WTC11 (cell line): ENCODE measurements at regions of chr11 and their contacts with region 1.

Region 1: DNA sequence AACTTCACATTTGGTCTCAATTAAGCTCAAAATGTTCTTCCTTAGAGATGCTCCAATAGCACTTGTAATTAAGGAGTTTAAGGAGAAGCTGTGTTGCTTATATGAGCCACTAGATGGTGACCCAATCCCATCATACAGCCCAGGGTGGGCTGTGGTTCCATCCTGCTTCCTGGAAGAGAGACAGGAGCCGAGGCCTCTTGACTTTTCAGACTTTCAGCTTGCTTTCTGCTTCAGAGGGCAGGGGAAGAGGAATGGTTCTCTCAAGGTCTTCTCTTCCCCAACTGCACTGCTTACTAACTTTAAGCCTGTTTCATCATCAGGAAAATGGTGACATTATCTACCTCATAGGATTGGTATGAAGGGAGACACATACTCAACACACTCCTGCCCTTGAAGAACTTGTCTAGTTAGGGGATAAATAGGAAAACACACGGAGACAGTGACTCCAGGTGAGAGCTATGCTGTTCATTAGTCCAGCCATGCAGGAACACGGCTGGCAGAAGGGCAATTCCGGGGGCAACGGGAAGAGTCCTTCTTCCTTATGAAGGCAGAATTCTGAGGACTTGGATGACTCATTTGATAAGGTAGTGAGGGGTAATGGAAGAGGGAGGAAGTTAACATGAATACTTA is 20.1 kb downstream of the TMEM218 start:
- DNase-seq: peak; percentile 58
- ATAC-seq: peak; percentile 95
- H3K4me3 Mint-ChIP-seq: no peak overlapping the region
- H3K27ac Mint-ChIP-seq: peak overlapping the region; percentile 64
- H3K4me1 Mint-ChIP-seq: peaks cover 25% of the 10 kb centered on the region
- H3K27me3 Mint-ChIP-seq: no peaks in the 10 kb centered on the region
- CTCF ChIP-seq: peak; percentile 25; the same call in 1 of the 2 replicates

Region 2: GRCh38 chr11:124946735-124947141 is 144.6 kb before region 1 on chr11:
- CTCF ChIA-PET with region 1: no interaction called
- POLR2A ChIA-PET with region 1: no interaction called
- DNase-seq: no peak
- ATAC-seq: no peak
- H3K4me3 Mint-ChIP-seq: no peak overlapping the region
- H3K27ac Mint-ChIP-seq: no peak overlapping the region
- H3K4me1 Mint-ChIP-seq: no peaks in the 10 kb centered on the region
- H3K27me3 Mint-ChIP-seq: peaks cover 23% of the 10 kb centered on the region
- CTCF ChIP-seq: no peak

Region 3: DNA sequence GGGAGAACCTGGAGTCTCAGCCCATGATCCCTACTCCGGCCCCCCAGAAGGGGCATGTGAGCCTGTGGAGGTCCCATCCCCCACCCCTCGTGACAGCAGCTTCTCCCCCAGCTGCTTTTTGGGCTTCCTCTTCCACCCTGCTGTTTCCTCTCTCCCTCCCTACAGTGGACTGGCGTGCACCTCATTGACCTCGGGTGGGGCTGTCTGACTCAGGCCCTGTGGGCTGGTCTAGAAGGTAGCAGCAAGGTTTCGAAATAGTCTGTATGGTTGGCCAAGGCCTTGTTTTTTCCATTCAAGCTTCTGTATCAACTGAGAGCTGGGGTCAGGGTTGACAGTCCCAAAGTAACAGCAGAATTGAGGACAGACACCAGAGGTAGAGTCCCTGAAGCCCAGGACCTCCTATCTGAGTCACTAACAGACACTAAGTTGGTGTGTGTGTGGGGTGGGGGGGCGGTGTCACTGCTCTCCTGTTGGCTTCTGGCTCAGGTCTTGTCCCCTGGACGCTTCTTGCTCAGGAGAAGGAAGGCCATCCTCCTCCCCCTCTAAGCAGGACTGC is 20.6 kb before region 1 on chr11:
- CTCF ChIA-PET with region 1: interaction called, 21 read pairs
- POLR2A ChIA-PET with region 1: no interaction called
- DNase-seq: no peak
- ATAC-seq: no peak
- H3K4me3 Mint-ChIP-seq: no peak overlapping the region
- H3K27ac Mint-ChIP-seq: no peak overlapping the region
- H3K4me1 Mint-ChIP-seq: peaks cover 16% of the 10 kb centered on the region
- H3K27me3 Mint-ChIP-seq: peaks cover 7% of the 10 kb centered on the region
- CTCF ChIP-seq: no peak

Region 4: GRCh38 chr11:125117429-125117828 is 26.1 kb after region 1 on chr11:
- CTCF ChIA-PET with region 1: interaction called, 45 read pairs
- POLR2A ChIA-PET with region 1: no interaction called
- DNase-seq: no peak
- ATAC-seq: no peak
- H3K4me3 Mint-ChIP-seq: no peak overlapping the region
- H3K27ac Mint-ChIP-seq: no peak overlapping the region
- H3K4me1 Mint-ChIP-seq: no peaks in the 10 kb centered on the region
- H3K27me3 Mint-ChIP-seq: peaks cover 50% of the 10 kb centered on the region
- CTCF ChIP-seq: no peak

Region 5: DNA sequence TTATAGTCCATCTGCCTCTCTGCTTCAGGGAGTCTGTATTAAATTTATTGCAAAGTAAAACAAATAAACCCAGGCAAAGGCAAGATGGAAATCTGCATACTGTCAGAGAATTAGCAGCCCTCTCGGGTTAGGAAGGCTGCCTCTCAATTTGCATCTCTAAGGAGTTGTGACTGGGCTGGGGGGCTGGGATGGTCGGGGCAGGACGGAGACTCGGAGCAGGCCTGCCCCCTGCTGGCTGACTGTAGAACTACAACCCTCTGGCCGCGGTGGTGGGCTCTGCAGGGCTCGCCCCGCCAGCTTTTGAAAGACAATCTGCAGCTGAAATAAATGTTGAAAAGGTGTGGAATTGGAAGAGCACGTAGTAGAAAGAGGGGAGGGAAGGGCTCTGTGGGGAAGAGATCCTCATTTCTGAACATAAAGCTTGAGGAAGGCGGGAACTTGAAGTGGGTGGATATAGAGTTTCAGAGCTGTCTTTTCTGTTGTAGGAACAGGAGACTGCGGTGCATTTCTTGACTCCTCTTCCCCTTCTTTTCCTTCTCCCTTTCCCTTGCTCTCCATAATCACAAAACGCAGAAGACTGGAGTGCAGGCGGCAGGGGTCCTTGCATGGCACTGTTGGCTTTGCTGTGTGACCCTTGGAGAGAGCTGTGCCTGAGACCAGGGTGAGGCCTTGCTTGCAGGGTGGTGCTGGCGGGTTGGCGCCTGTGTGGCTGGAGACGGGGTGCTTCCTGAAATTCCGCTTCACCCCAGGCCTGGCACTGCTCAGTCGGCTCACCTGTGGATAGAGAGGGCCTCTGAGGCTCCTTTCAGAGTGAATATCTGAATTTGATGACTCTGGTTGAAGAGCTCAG is 50.5 kb after region 1 on chr11:
- CTCF ChIA-PET with region 1: interaction called, 126 read pairs
- POLR2A ChIA-PET with region 1: interaction called, 3 read pairs
- DNase-seq: peak; percentile 90
- ATAC-seq: peak; percentile 88
- H3K4me3 Mint-ChIP-seq: peak overlapping the region; percentile 53
- H3K27ac Mint-ChIP-seq: no peak overlapping the region
- H3K4me1 Mint-ChIP-seq: peaks cover 62% of the 10 kb centered on the region
- H3K27me3 Mint-ChIP-seq: peaks cover 89% of the 10 kb centered on the region
- CTCF ChIP-seq: peak; percentile 99

Region 6: GRCh38 chr11:125247431-125247830 is 156.1 kb after region 1 on chr11:
- CTCF ChIA-PET with region 1: no interaction called
- POLR2A ChIA-PET with region 1: no interaction called
- DNase-seq: no peak
- ATAC-seq: no peak
- H3K4me3 Mint-ChIP-seq: no peak overlapping the region
- H3K27ac Mint-ChIP-seq: no peak overlapping the region
- H3K4me1 Mint-ChIP-seq: peaks cover 16% of the 10 kb centered on the region
- H3K27me3 Mint-ChIP-seq: no peaks in the 10 kb centered on the region; the same call in 1 of the 2 replicates
- CTCF ChIP-seq: no peak

Region 7: DNA sequence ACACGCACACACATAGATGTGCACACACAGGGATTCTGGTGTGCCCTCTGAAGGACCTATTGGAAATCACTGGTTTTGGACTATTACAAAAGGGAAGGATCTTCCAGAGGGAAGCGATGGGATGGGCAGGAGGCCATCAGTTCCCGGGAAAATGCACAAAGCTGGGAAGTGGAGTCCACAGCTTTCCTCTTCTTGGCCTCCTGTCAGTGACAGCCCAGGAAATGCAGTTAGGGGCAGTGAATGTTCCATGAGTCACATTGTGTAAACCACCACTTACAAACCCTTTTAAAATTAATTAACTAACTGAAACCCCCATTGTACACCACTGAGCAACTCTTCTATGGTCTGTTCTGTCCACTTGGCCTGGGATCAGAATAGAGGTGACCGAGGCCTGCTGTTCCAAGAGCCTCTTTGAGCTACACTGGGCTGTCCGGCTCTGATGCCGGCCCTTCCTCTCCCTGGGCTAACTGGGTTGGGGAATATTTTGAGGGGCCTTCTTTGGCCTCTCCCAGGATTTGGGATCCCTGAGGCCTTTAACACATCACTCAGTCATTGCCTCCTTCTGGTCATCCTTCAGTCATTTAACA is 267.0 kb after region 1 on chr11:
- CTCF ChIA-PET with region 1: interaction called, 20 read pairs
- POLR2A ChIA-PET with region 1: no interaction called
- DNase-seq: no peak
- ATAC-seq: no peak
- H3K4me3 Mint-ChIP-seq: no peak overlapping the region
- H3K27ac Mint-ChIP-seq: no peak overlapping the region
- H3K4me1 Mint-ChIP-seq: no peaks in the 10 kb centered on the region; the same call in 1 of the 2 replicates
- H3K27me3 Mint-ChIP-seq: no peaks in the 10 kb centered on the region; the same call in 1 of the 2 replicates
- CTCF ChIP-seq: no peak

Region 8: DNA sequence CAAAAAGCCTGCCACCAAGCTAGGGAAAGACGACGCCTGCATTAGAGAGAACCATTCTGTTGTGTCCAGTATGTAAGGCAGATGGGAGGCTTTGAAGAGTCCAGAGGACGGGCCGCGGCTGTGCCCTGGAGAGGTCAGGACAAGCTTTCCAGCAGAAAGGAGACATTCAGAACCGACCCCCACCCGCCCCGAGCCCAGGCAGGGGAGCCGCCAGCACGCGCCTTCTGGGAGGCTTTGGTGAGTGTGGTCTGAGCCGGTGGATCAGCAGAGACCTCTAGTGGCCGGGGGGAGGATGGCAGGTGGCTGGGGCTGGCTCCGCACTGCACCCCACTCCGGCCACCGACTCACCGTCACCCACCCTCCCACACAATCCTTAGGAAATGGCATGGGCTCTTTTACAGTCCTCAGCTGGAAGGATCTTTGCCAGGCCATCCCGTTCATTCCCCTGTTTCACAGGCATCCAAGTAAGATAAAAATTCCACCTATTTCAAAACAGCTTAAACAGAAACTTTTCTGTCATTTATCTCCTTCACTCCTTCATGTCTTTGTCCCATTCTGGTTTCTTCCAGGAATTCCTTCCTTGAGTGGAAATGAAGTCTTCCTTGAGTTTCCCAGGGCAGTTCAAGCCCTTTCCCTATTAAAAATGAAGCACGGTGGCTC is 313.5 kb after region 1 on chr11:
- CTCF ChIA-PET with region 1: interaction called, 42 read pairs
- POLR2A ChIA-PET with region 1: no interaction called
- DNase-seq: peak; percentile 90
- ATAC-seq: peak; percentile 84
- H3K4me3 Mint-ChIP-seq: no peak overlapping the region
- H3K27ac Mint-ChIP-seq: 0 out of 2 replicates have a peak overlapping the region, but pooled peaks have one; percentile 29
- H3K4me1 Mint-ChIP-seq: peaks cover 61% of the 10 kb centered on the region
- H3K27me3 Mint-ChIP-seq: peaks cover 23% of the 10 kb centered on the region
- CTCF ChIP-seq: peak; percentile 98

Region 9: GRCh38 chr11:125429166-125429707 is 337.9 kb after region 1 on chr11:
- CTCF ChIA-PET with region 1: interaction called, 128 read pairs
- POLR2A ChIA-PET with region 1: interaction called, 3 read pairs
- DNase-seq: peak; percentile 90
- ATAC-seq: peak; percentile 66
- H3K4me3 Mint-ChIP-seq: no peak overlapping the region
- H3K27ac Mint-ChIP-seq: no peak overlapping the region
- H3K4me1 Mint-ChIP-seq: peaks cover 36% of the 10 kb centered on the region
- H3K27me3 Mint-ChIP-seq: no peaks in the 10 kb centered on the region
- CTCF ChIP-seq: peak; percentile 48